Activated CD4-positive, alpha-beta memory T cell treated with anti-CD3 and anti-CD28 coated beads, Interleukin-2, amount 10 ng/mL, durations not matched to agents 7 days and 5 days (primary cell): ENCODE measurements at regions of chr12 and their contacts with region 1.

Region 1: GRCh38 chr12:76020731-76021672 is 10.6 kb downstream of the PHLDA1 start:
- DNase-seq: peak; percentile 83
- H3K4me3 Mint-ChIP-seq: peak overlapping the region; percentile 53
- H3K27ac Mint-ChIP-seq: peak overlapping the region; percentile 100
- H3K4me1 Mint-ChIP-seq: peaks cover 69% of the 10 kb centered on the region
- H3K27me3 Mint-ChIP-seq: no peaks in the 10 kb centered on the region

Region 2: GRCh38 chr12:75511116-75512048 is 509.6 kb before region 1 on chr12 and contains the start of gene KRR1:
- CTCF ChIA-PET with region 1: no interaction called
- POLR2A ChIA-PET with region 1: interaction called, 11 read pairs
- DNase-seq: peak; percentile 94
- H3K4me3 Mint-ChIP-seq: peak within 1 kb of the TSS; percentile 96
- H3K27ac Mint-ChIP-seq: peak within 1 kb of the TSS; percentile 98
- H3K4me1 Mint-ChIP-seq: peaks cover 33% of the 10 kb centered on the region
- H3K27me3 Mint-ChIP-seq: no peaks in the 10 kb centered on the region
- total RNA-seq, gene KRR1: 61.8 to 67.2 TPM

Region 3: GRCh38 chr12:75900781-75901254 is 120.2 kb before region 1 on chr12:
- CTCF ChIA-PET with region 1: no interaction called
- POLR2A ChIA-PET with region 1: no interaction called
- DNase-seq: no peak
- H3K4me3 Mint-ChIP-seq: no peak overlapping the region
- H3K27ac Mint-ChIP-seq: no peak overlapping the region
- H3K4me1 Mint-ChIP-seq: no peaks in the 10 kb centered on the region
- H3K27me3 Mint-ChIP-seq: peaks cover 11% of the 10 kb centered on the region

Region 4: DNA sequence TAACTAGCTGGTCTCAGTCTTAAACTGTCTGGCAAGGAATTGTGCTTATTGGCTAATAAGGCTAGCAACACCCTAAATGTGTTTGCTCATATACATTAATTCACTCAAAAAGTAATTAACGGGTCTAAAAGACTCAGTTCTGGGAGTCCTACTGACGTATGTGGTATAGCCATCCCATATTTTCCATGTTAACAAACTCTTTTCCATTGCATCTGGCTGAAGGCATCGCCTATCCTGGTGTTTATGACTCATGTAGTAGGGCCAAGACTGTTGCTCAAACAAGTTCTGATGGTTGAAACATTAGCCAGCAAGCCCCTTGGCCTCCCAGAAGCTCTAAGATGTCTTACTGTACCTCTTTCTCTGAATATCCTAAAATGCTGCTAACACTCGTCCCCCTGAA is 87.9 kb before region 1 on chr12:
- CTCF ChIA-PET with region 1: interaction called, 4 read pairs
- POLR2A ChIA-PET with region 1: interaction called, 61 read pairs
- DNase-seq: no peak
- H3K4me3 Mint-ChIP-seq: no peak overlapping the region
- H3K27ac Mint-ChIP-seq: no peak overlapping the region
- H3K4me1 Mint-ChIP-seq: peaks cover 34% of the 10 kb centered on the region
- H3K27me3 Mint-ChIP-seq: peaks cover 5% of the 10 kb centered on the region

Region 5: GRCh38 chr12:75960086-75960910 is 60.7 kb before region 1 on chr12:
- CTCF ChIA-PET with region 1: interaction called, 4 read pairs
- POLR2A ChIA-PET with region 1: interaction called, 21 read pairs
- DNase-seq: no peak
- H3K4me3 Mint-ChIP-seq: no peak overlapping the region
- H3K27ac Mint-ChIP-seq: no peak overlapping the region
- H3K4me1 Mint-ChIP-seq: peaks cover 40% of the 10 kb centered on the region
- H3K27me3 Mint-ChIP-seq: no peaks in the 10 kb centered on the region

Region 6: GRCh38 chr12:75984577-75985182 is 36.3 kb before region 1 on chr12:
- CTCF ChIA-PET with region 1: interaction called, 6 read pairs
- POLR2A ChIA-PET with region 1: interaction called, 94 read pairs
- DNase-seq: peak; percentile 32
- H3K4me3 Mint-ChIP-seq: no peak overlapping the region
- H3K27ac Mint-ChIP-seq: peak overlapping the region; percentile 41
- H3K4me1 Mint-ChIP-seq: peaks cover 54% of the 10 kb centered on the region
- H3K27me3 Mint-ChIP-seq: peaks cover 3% of the 10 kb centered on the region